Activated T-helper 1 cell treated with anti-CD3 and anti-CD28 coated beads, Interleukin-12 subunit alpha, Interleukin-12 subunit beta, Interleukin-2, Interleukin-4 antibody, amounts not matched to agents 30 ng/mL and 10 ng/mL and 1 ng/mL, durations not matched to agents 14 hours and 24 hours and 36 hours (primary cell): ENCODE measurements at regions of chr12 and their contacts with region 1.

Region 1: DNA sequence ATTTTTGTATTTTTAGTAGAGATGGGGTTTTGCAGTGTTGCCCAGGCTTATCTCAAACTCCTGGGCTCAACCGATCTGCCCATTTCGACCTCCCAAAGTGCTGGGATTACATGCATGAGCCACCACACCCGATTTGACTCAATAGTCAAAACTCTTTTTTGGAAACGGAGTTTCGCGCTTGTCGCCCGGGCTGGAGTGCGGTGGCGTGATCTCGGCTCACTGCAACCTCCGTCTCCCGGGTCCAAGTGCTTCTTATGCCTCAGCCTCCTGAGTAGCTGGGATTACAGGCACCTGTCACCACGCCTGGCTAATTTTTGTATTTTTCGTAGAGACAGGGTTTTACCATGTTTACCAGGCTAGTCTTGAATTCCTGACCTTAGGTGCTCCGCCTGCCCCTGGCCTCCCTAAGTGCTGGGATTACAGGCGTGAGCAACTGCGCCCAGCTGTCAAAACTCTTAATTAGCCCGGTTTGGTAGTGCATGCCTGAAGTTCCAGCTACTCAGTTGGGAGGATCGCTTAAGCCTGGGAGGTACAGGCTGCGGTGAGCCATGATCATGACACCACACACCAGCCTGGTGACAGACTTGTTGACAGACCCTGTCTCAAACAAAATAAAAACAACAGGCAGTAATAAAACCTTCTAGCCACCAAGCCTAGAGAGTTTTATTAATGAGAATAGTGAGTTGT is 12.4 kb downstream of the MED21 start:
- DNase-seq: no peak
- H3K4me3 Mint-ChIP-seq: no peak overlapping the region
- H3K27ac Mint-ChIP-seq: no peak overlapping the region
- H3K4me1 Mint-ChIP-seq: no peaks in the 10 kb centered on the region
- H3K27me3 Mint-ChIP-seq: no peaks in the 10 kb centered on the region

Region 2: GRCh38 chr12:27123642-27124041 is 88.9 kb after region 1 on chr12:
- intact Hi-C with region 1: loop called (anchors 1 kb)
- DNase-seq: no peak
- H3K4me3 Mint-ChIP-seq: no peak overlapping the region
- H3K27ac Mint-ChIP-seq: no peak overlapping the region
- H3K4me1 Mint-ChIP-seq: no peaks in the 10 kb centered on the region
- H3K27me3 Mint-ChIP-seq: peaks cover 7% of the 10 kb centered on the region

Region 3: GRCh38 chr12:27142101-27142721 is 107.5 kb after region 1 on chr12:
- intact Hi-C with region 1: loop called (anchors 1 kb)
- DNase-seq: peak; percentile 16
- H3K4me3 Mint-ChIP-seq: no peak overlapping the region
- H3K27ac Mint-ChIP-seq: no peak overlapping the region
- H3K4me1 Mint-ChIP-seq: peaks cover 31% of the 10 kb centered on the region
- H3K27me3 Mint-ChIP-seq: no peaks in the 10 kb centered on the region